ENCODE measurements at regions of chr18 and their contacts with region 1.

Region 1: DNA sequence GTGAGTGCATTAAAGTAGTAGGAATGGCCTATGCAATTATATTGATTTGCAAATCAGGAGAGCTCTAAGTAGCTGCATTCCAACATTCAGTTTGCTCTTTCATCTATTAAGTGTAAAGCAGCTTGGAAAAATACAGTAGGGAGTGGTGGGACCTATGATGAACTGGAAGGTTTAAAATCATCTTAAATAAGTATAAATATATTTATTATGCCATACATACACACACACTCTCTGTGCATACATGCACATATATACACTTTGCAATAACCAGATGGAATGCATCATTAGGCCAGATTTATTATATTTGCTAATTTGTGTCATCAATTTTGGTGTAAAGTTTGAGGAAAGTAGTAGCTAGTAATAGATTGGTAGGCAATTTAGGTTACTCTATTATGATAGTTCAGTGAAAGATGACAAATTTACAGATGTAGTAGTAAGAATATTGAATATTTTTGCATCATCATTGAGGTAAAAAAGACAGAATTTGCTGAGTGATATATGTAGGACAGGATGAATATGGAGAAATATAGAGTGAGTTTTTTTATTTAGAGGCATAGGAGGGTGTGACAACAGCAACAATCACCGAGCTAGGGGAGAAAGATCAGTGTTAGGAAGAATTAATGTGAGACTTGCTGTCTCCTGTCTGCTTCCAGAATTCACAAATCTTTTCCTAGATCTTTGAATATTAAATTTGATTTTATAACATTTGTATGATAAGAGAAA is 961.0 kb upstream of the CDH2 start:
- DNase-seq: no peak
- H3K4me3 ChIP-seq: no peak overlapping the region
- H3K4me3 Mint-ChIP-seq: no peak overlapping the region
- H3K27ac ChIP-seq: no peak overlapping the region
- H3K27ac Mint-ChIP-seq: no peak overlapping the region
- H3K4me1 ChIP-seq: no peaks in the 10 kb centered on the region
- H3K4me1 Mint-ChIP-seq: no peaks in the 10 kb centered on the region
- H3K27me3 ChIP-seq: no peaks in the 10 kb centered on the region
- H3K27me3 Mint-ChIP-seq: no peaks in the 10 kb centered on the region
- CTCF ChIP-seq: no peak

Region 2: GRCh38 chr18:28504100-28504499 is 633.8 kb before region 1 on chr18:
- intact Hi-C with region 1: no loop called
- DNase-seq: no peak
- H3K4me3 ChIP-seq: no peak overlapping the region
- H3K4me3 Mint-ChIP-seq: no peak overlapping the region
- H3K27ac ChIP-seq: no peak overlapping the region
- H3K27ac Mint-ChIP-seq: no peak overlapping the region
- H3K4me1 ChIP-seq: no peaks in the 10 kb centered on the region
- H3K4me1 Mint-ChIP-seq: no peaks in the 10 kb centered on the region
- H3K27me3 ChIP-seq: no peaks in the 10 kb centered on the region
- H3K27me3 Mint-ChIP-seq: no peaks in the 10 kb centered on the region
- CTCF ChIP-seq: no peak

Region 3: DNA sequence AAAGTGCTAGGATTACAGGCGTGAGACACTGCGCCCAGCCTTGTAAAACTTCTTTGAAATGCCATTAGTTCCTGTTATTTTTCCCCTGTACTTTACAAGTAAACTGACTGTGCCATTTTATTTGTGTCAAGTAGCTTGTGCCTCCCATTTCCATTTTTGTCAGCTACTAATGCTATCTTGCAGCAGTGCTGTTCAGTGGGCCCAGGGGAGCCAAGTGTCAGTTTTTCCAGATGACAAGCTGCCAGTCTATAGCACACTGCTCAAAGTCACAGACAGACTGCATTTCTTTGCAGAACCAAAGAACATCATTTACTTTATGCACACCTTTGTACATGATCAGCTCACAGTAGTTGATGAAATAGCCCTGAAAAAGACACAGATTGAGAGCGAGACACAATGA is 59.7 kb before region 1 on chr18:
- intact Hi-C with region 1: loop called in 1 of 2 experiments (anchors 10 kb)
- DNase-seq: no peak
- H3K4me3 ChIP-seq: no peak overlapping the region
- H3K4me3 Mint-ChIP-seq: no peak overlapping the region
- H3K27ac ChIP-seq: no peak overlapping the region
- H3K27ac Mint-ChIP-seq: no peak overlapping the region
- H3K4me1 ChIP-seq: no peaks in the 10 kb centered on the region
- H3K4me1 Mint-ChIP-seq: no peaks in the 10 kb centered on the region
- H3K27me3 ChIP-seq: no peaks in the 10 kb centered on the region
- H3K27me3 Mint-ChIP-seq: no peaks in the 10 kb centered on the region
- CTCF ChIP-seq: no peak

Region 4: DNA sequence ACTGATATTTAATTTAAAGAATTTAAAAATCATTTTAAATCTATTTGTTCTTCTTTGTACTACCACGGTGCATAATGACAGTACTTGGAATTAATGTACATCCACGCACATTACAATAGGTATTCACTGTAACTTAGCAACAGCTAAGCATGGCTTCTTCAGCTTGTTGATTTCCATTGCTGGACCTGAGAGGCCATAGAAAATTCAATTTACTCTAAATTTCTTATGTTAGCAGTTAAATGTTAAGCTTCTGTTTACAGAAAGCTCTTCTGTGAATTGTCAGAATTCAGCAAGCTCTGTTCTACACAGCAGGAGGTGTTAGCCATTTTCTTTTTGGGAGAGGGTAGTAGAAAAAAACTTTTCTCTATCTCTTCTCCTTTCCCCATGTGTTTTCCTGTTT is 188.3 kb after region 1 on chr18:
- intact Hi-C with region 1: no loop called
- DNase-seq: no peak
- H3K4me3 ChIP-seq: no peak overlapping the region
- H3K4me3 Mint-ChIP-seq: no peak overlapping the region
- H3K27ac ChIP-seq: no peak overlapping the region
- H3K27ac Mint-ChIP-seq: no peak overlapping the region
- H3K4me1 ChIP-seq: no peaks in the 10 kb centered on the region
- H3K4me1 Mint-ChIP-seq: no peaks in the 10 kb centered on the region
- H3K27me3 ChIP-seq: no peaks in the 10 kb centered on the region
- H3K27me3 Mint-ChIP-seq: peaks cover 0 to 2% (median 0%) of the 10 kb centered on the region in 3 donors
- CTCF ChIP-seq: no peak

Region 5: DNA sequence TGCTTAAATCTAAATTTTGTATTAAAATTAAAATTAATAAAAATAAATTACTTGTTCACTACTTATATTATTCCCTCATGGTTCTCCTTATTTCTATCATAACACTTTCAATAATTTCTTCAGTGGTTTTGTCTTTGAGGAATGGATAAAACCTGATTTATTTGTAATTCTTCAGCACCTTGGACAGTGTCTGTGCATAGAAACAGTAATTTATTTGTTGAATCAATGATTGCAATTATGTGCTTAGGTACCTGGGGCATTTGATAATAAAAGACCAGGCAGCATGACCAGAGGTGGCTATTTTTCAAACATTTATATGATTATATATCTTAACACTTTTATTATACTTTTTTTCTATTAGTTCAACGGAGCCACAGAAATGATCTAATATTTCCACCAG is 841.9 kb after region 1 on chr18:
- intact Hi-C with region 1: no loop called
- DNase-seq: no peak
- H3K4me3 ChIP-seq: no peak overlapping the region
- H3K4me3 Mint-ChIP-seq: no peak overlapping the region
- H3K27ac ChIP-seq: no peak overlapping the region
- H3K27ac Mint-ChIP-seq: no peak overlapping the region
- H3K4me1 ChIP-seq: no peaks in the 10 kb centered on the region
- H3K4me1 Mint-ChIP-seq: no peaks in the 10 kb centered on the region
- H3K27me3 ChIP-seq: no peaks in the 10 kb centered on the region
- H3K27me3 Mint-ChIP-seq: no peaks in the 10 kb centered on the region
- CTCF ChIP-seq: no peak

Measured in CD14-positive monocyte (primary cell).